ENCODE measurements at regions of chr5 and their contacts with region 1.

Region 1: GRCh38 chr5:56838409-56839039 is 23.2 kb downstream of the MAP3K1 start:
- DNase-seq: peak; percentile 58
- H3K4me3 ChIP-seq: peak overlapping the region in 2 of 3 experiments; percentile 12 to 25
- H3K27ac ChIP-seq: peak overlapping the region; percentile 27
- H3K4me1 ChIP-seq: peaks cover 5% of the 10 kb centered on the region
- H3K27me3 ChIP-seq: no peaks in the 10 kb centered on the region
- CTCF ChIP-seq: peak; percentile 32 to 57

Region 2: GRCh38 chr5:56279979-56280378 is 558.5 kb before region 1 on chr5:
- CTCF ChIA-PET with region 1: interaction called, 4 read pairs
- dilution Hi-C with region 1: no loop called
- in situ Hi-C with region 1: loop called in 1 of 2 experiments (anchors 5 kb)
- intact Hi-C with region 1: no loop called
- DNase-seq: no peak
- H3K4me3 ChIP-seq: no peak overlapping the region
- H3K27ac ChIP-seq: no peak overlapping the region
- H3K4me1 ChIP-seq: peaks cover 22% of the 10 kb centered on the region
- H3K27me3 ChIP-seq: no peaks in the 10 kb centered on the region
- CTCF ChIP-seq: no peak

Region 3: GRCh38 chr5:56856541-56857178 is 18.1 kb after region 1 on chr5:
- CTCF ChIA-PET with region 1: interaction called, 11 read pairs
- dilution Hi-C with region 1: no loop called
- in situ Hi-C with region 1: no loop called
- intact Hi-C with region 1: no loop called
- DNase-seq: no peak
- H3K4me3 ChIP-seq: no peak overlapping the region
- H3K27ac ChIP-seq: no peak overlapping the region
- H3K4me1 ChIP-seq: peaks cover 4% of the 10 kb centered on the region
- H3K27me3 ChIP-seq: no peaks in the 10 kb centered on the region
- CTCF ChIP-seq: no peak